Caco-2 (cell line): ENCODE measurements at regions of chr20 and their contacts with region 1.

Region 1: DNA sequence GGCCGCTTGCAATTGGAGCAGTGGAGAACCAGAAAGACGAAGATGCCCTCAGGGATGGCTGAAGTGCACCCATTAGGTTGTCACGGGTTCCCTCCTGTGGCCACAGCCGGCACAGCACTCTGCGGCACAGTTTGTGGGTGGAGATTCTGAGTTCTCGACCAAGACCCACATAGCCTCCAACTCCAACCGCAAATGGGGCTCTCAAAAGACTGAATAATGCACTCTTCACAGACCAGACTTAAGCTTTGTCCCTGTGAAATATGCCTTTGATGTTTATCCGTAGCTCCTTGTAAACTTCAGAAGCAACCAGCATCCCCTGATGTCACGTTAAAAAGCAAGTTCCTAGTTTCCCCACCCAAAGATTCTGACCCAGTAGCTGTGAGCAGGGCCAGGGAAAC is 934 bp upstream of the CST9 start:
- DNase-seq: peak; percentile 87 to 89
- H3K4me3 ChIP-seq: no peak overlapping the region
- H3K4me3 Mint-ChIP-seq: no peak overlapping the region
- H3K27ac Mint-ChIP-seq: no peak overlapping the region
- H3K4me1 ChIP-seq: no peaks in the 10 kb centered on the region
- H3K4me1 Mint-ChIP-seq: no peaks in the 10 kb centered on the region
- H3K27me3 ChIP-seq: no peaks in the 10 kb centered on the region
- H3K27me3 Mint-ChIP-seq: no peaks in the 10 kb centered on the region
- CTCF ChIP-seq: peak; percentile 91 to 95

Region 2: GRCh38 chr20:23350196-23350903 is 256.3 kb before region 1 on chr20 and contains the start of gene NXT1:
- CTCF ChIA-PET with region 1: no interaction called
- POLR2A ChIA-PET with region 1: no interaction called
- intact Hi-C with region 1: loop called (anchors 10 kb)
- DNase-seq: peak; percentile 98 to 99
- H3K4me3 ChIP-seq: peak within 1 kb of the TSS; percentile 98
- H3K4me3 Mint-ChIP-seq: peak within 1 kb of the TSS; percentile 89
- H3K27ac Mint-ChIP-seq: peak within 1 kb of the TSS; percentile 100
- H3K4me1 ChIP-seq: peaks cover 17% of the 10 kb centered on the region
- H3K4me1 Mint-ChIP-seq: peaks cover 16% of the 10 kb centered on the region
- H3K27me3 ChIP-seq: no peaks in the 10 kb centered on the region
- H3K27me3 Mint-ChIP-seq: no peaks in the 10 kb centered on the region
- CTCF ChIP-seq: no peak
- total RNA-seq, gene NXT1: 33.6 and 34.1 TPM in 2 replicates

Region 3: DNA sequence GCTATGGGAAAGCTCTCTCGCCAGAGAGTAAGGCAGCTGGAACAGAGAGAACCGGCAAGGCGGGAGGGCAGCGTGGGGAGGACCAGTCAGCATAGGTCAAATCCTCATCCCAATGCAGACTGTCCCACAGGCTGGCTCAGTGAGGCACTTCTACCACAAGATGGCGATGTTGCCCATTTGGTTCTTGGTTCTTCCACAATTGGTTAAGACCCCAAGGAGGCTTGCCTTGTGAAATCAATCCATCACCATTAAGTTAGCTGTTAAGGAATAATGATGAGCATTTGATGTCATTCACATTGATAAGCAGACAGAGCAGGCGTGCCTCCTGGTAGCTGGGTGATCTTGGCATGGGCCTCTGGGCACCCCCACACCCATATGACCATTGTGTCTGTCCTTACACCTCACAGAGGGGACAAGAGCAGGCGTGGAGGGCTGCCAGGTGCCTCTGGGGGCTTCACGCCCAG is 164.8 kb before region 1 on chr20:
- CTCF ChIA-PET with region 1: interaction called, 3 read pairs
- POLR2A ChIA-PET with region 1: no interaction called
- intact Hi-C with region 1: loop called (anchors 1 kb)
- DNase-seq: peak; percentile 82 to 83
- H3K4me3 ChIP-seq: no peak overlapping the region
- H3K4me3 Mint-ChIP-seq: no peak overlapping the region
- H3K27ac Mint-ChIP-seq: no peak overlapping the region
- H3K4me1 ChIP-seq: no peaks in the 10 kb centered on the region
- H3K4me1 Mint-ChIP-seq: no peaks in the 10 kb centered on the region
- H3K27me3 ChIP-seq: no peaks in the 10 kb centered on the region
- H3K27me3 Mint-ChIP-seq: no peaks in the 10 kb centered on the region
- CTCF ChIP-seq: peak; percentile 89 to 90

Region 4: DNA sequence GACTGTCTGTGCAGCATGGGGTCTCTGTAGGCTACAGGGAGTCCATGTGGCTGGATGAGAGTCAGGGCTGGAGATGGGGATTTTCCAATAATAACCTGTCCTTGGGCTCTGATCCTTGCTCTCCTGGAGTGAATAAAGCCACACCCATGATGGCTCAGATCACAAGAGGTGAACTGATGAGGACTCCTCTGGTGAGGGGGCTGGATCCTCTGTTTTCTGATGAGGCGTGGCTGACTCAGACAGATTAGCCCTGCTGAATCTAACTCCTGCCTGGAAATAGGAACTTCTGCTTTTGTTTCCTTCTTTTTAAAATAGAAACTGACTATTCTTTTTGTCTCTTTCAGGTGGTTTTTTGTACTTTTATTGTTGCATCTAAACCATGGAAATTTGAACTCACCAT is 65.3 kb before region 1 on chr20:
- CTCF ChIA-PET with region 1: no interaction called
- POLR2A ChIA-PET with region 1: no interaction called
- intact Hi-C with region 1: loop called (anchors 10 kb)
- DNase-seq: no peak
- H3K4me3 ChIP-seq: no peak overlapping the region
- H3K4me3 Mint-ChIP-seq: no peak overlapping the region
- H3K27ac Mint-ChIP-seq: no peak overlapping the region
- H3K4me1 ChIP-seq: no peaks in the 10 kb centered on the region
- H3K4me1 Mint-ChIP-seq: no peaks in the 10 kb centered on the region
- H3K27me3 ChIP-seq: peaks cover 1% of the 10 kb centered on the region; the same call in 1 of the 2 replicates
- H3K27me3 Mint-ChIP-seq: peaks cover 10% of the 10 kb centered on the region
- CTCF ChIP-seq: no peak